Vagina (tissue), 2 donors: ENCODE measurements at regions of chr5 and their contacts with region 1.

Region 1: DNA sequence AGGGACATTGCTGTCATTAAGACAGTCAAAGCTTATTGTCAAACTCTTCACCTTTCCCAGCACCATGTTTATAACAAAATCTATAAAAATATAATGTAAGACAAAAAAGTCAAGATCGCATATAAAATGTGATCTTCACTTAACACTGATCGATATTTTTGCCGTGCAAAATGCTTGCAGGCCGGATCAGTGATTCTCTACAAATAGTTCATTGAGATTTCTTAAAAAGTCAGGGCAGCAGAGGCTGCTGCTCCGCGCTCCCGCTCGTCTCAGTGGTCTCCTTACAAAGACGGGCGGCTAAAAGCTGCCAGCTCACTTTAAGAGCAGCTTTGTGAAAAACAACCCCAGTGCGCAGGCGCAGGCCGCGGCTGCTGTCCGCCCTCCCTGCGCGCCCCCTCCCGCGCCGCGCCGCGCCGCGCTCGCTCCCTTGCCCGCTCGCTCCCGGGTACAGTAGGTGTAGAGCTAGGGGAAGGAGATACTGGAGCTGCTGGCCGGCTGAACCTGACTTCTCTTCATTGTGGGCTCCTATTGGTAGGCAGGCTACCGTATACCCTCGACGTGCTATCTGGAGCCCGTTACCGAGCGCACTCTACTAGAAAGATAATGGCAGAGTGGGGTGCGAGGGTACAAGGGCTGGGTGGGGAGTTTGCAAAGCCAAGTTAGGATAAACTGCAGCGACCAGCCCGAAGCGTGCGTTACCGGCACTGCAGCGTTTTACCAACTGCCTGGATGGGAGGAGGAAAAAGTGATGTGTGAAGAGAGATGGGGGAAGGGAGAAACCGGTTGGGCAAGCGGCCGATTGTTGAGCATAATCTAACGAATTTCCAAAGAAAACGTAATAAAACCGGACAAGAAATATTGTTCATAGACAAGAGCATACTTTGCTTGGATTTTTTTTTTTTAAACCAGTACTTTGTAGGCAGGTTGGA is at the start of gene ARRDC3:
- DNase-seq: peak; percentile 97 to 98
- H3K4me3 ChIP-seq: peak within 1 kb of the TSS; percentile 62 to 83
- H3K27ac ChIP-seq: peak within 1 kb of the TSS; percentile 100
- H3K4me1 ChIP-seq: peaks cover 16% of the 10 kb centered on the region
- H3K27me3 ChIP-seq: no peaks in the 10 kb centered on the region
- CTCF ChIP-seq: peak in 2 of 3 experiments; percentile 7 to 16
- POLR2A ChIP-seq: peak; percentile 76 to 95
- total RNA-seq, gene ARRDC3: 26.3 TPM

Region 2: GRCh38 chr5:90932052-90932699 is 451.1 kb before region 1 on chr5:
- intact Hi-C with region 1: loop called (anchors 10 kb)
- DNase-seq: no peak
- H3K4me3 ChIP-seq: no peak overlapping the region
- H3K27ac ChIP-seq: no peak overlapping the region
- H3K4me1 ChIP-seq: no peaks in the 10 kb centered on the region
- H3K27me3 ChIP-seq: no peaks in the 10 kb centered on the region
- CTCF ChIP-seq: peak; percentile 54 to 74 (median 56)
- POLR2A ChIP-seq: no peak

Region 3: DNA sequence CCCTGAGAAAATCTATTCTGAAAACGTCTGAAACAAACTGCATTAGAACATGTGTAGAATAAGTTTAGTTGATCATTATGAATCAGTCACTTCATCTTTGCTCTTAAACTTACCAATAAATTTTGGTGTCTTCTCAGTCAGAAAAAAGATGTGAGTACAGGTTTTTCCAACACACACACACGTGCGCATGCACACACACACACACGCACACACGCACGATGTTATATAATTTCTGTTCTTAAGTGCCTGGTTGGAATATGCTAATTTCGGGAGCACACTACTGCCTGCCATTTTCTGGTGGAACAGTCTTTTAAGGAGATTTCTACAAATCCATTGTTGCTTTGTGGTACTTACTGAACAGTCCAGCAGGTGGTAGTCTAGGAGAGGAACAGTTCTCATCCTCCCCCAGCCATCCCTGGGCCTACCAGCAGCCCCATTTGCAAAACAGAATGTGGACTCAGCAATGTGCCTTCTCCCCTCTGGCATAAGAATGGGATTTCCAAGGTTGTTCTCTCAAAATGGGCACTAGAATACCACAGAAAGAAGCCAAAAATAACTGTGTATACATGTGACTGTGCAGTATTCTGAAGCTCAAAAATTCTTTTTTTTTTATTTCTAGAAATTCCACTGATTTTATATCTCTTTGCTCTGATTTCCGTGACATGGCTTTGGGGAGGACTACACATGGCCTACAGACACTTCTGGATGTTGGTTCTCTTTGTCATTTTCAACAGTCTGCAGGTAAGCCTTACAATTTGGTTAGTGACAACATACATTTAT is 281.5 kb before region 1 on chr5:
- intact Hi-C with region 1: loop called (anchors 5 kb)
- DNase-seq: no peak
- H3K4me3 ChIP-seq: no peak overlapping the region
- H3K27ac ChIP-seq: no peak overlapping the region
- H3K4me1 ChIP-seq: peaks cover 3% of the 10 kb centered on the region
- H3K27me3 ChIP-seq: no peaks in the 10 kb centered on the region
- CTCF ChIP-seq: peak; percentile 73 to 88 (median 77)
- POLR2A ChIP-seq: no peak

Region 4: DNA sequence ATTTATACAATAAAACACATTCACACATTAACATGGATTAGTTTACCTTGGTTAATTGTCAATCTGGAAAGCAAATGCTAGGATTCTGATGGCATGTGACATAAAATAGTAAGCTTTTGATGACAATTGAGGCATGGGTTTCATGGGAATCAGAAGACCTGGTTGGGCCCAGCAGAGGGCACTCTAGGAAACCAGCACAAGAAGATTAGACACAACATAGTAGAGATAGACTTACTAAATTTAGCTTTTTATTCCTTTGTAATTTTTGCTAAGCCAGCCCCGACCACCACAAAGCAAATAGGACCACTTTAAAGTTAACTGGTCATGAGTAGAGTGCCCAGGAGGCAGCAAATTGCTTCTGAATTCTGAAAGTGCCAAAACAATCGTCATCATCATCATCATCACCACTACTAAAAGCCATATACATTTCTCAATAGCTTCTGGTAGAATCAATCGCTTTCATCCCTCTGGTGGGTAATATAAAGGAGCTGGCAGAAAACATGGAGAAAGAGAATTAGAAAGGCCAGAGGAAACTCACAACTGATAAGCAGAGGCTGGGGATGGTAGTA is 163.4 kb before region 1 on chr5:
- intact Hi-C with region 1: loop called (anchors 10 kb)
- DNase-seq: no peak
- H3K4me3 ChIP-seq: no peak overlapping the region
- H3K27ac ChIP-seq: no peak overlapping the region
- H3K4me1 ChIP-seq: peaks cover 11% of the 10 kb centered on the region
- H3K27me3 ChIP-seq: no peaks in the 10 kb centered on the region
- CTCF ChIP-seq: no peak
- POLR2A ChIP-seq: no peak

Region 5: GRCh38 chr5:91269198-91269597 is 114.1 kb before region 1 on chr5:
- intact Hi-C with region 1: no loop called
- DNase-seq: no peak
- H3K4me3 ChIP-seq: no peak overlapping the region
- H3K27ac ChIP-seq: no peak overlapping the region
- H3K4me1 ChIP-seq: no peaks in the 10 kb centered on the region
- H3K27me3 ChIP-seq: no peaks in the 10 kb centered on the region
- CTCF ChIP-seq: no peak
- POLR2A ChIP-seq: no peak

Region 6: GRCh38 chr5:91280362-91281269 is 102.7 kb before region 1 on chr5:
- intact Hi-C with region 1: loop called (anchors 5 kb)
- DNase-seq: peak in 1 of 2 donors; percentile 97
- H3K4me3 ChIP-seq: peak overlapping the region; percentile 52 to 64
- H3K27ac ChIP-seq: peak overlapping the region; percentile 82
- H3K4me1 ChIP-seq: peaks cover 30% of the 10 kb centered on the region
- H3K27me3 ChIP-seq: no peaks in the 10 kb centered on the region
- CTCF ChIP-seq: no peak
- POLR2A ChIP-seq: peak in 1 of 2 donors; percentile 48